Esophagus muscularis mucosa (tissue), 4 donors: ENCODE measurements at regions of chr17 and their contacts with region 1.

Region 1: DNA sequence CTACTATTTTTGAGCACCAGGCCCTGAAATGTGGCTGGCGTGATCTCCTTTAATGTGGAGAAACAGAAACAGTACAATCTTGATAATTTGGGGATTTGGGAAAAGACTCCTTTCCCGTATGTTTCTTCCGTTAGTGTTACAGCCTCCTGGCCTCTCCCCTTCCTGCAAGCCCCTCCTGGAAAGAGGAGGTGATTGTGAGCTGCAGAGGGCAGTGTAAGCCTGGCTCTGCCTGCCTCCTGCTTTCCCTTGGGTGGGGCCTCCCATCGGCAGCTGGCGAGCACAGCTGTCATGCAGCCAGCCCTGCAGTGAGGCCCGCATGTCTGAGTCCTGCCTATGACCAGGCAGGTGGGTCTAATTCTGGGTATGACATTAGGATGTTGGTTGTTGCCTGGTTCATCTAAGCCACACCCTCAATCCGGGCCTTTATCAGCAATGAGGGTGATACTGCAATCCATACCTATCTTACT is 48.7 kb upstream of the WSB1 start:
- DNase-seq: peak; percentile 93
- H3K4me3 ChIP-seq: peak overlapping the region; percentile 24 to 37 (median 34)
- H3K27ac ChIP-seq: peak overlapping the region; percentile 84 to 91 (median 88)
- H3K4me1 ChIP-seq: peaks cover 44 to 79% (median 66%) of the 10 kb centered on the region in 4 donors
- H3K27me3 ChIP-seq: no peaks in the 10 kb centered on the region
- CTCF ChIP-seq: peak; percentile 62 to 72 (median 71)
- EP300 ChIP-seq: no peak
- POLR2A ChIP-seq: no peak

Region 2: GRCh38 chr17:27282054-27282551 is 36.8 kb after region 1 on chr17:
- intact Hi-C with region 1: no loop called
- DNase-seq: no peak
- H3K4me3 ChIP-seq: no peak overlapping the region
- H3K27ac ChIP-seq: no peak overlapping the region
- H3K4me1 ChIP-seq: peaks cover 0 to 14% (median 3%) of the 10 kb centered on the region in 4 donors
- H3K27me3 ChIP-seq: no peaks in the 10 kb centered on the region
- CTCF ChIP-seq: no peak
- EP300 ChIP-seq: no peak
- POLR2A ChIP-seq: no peak

Region 3: GRCh38 chr17:27293898-27294688 is 48.8 kb after region 1 on chr17 and contains the start of gene WSB1:
- intact Hi-C with region 1: loop called (anchors 2 kb)
- DNase-seq: peak; percentile 98
- H3K4me3 ChIP-seq: peak within 1 kb of the TSS; percentile 85 to 98 (median 90)
- H3K27ac ChIP-seq: peak within 1 kb of the TSS; percentile 99 to 100 (median 100)
- H3K4me1 ChIP-seq: peaks cover 28 to 41% (median 35%) of the 10 kb centered on the region in 4 donors
- H3K27me3 ChIP-seq: no peaks in the 10 kb centered on the region
- CTCF ChIP-seq: no peak
- EP300 ChIP-seq: peak; percentile 11
- POLR2A ChIP-seq: peak; percentile 95
- total RNA-seq, gene WSB1: 84.1 to 125 (median 118) TPM

Region 4: DNA sequence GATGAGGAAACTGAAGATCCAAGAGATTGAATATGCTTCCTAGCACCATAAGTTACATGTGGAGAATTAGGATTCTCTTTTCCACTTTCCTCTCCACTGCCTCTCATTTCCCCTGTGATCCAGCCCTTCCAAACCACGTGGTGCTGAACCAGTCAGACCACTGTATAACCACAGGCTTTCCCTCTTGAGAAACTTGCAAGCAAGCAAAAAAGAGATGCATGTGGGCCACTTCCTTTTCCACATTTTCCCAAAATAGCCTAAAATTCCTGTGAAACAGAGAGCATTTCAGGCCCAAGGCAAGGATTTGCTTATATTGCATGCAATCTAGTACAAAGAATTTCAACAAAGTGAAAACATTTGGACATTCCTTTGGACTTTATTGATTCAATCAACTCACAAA is 151.7 kb after region 1 on chr17:
- intact Hi-C with region 1: no loop called
- DNase-seq: no peak
- H3K4me3 ChIP-seq: no peak overlapping the region
- H3K27ac ChIP-seq: no peak overlapping the region
- H3K4me1 ChIP-seq: no peaks in the 10 kb centered on the region
- H3K27me3 ChIP-seq: no peaks in the 10 kb centered on the region
- CTCF ChIP-seq: no peak
- EP300 ChIP-seq: no peak
- POLR2A ChIP-seq: no peak